ENCODE measurements at regions of chr22 and their contacts with region 1.

Region 1: DNA sequence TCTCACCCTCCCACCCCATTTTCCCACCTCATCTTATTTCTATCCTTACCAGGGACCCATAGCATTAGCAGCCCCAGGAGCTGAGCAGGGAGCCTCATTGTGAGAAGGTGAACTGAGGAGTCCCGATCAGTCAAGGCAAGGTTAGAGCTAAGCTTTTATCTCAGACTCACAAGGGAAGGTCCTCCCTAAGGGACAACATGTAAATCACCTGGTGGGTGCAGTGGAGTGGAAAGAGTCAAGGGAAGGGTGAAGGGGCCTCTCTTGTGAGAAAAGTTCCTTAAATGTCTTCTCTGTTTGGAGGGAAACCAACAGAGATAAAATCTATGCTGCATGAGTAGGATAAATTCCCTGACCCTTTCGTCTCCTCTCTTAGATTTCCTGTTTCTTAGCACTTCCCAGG is 85.9 kb downstream of the GAB4 start:
- DNase-seq: no peak
- H3K4me3 ChIP-seq: no peak overlapping the region
- H3K27ac ChIP-seq: no peak overlapping the region
- H3K4me1 ChIP-seq: peaks cover 3% of the 10 kb centered on the region
- H3K27me3 ChIP-seq: peaks cover 12% of the 10 kb centered on the region

Region 2: DNA sequence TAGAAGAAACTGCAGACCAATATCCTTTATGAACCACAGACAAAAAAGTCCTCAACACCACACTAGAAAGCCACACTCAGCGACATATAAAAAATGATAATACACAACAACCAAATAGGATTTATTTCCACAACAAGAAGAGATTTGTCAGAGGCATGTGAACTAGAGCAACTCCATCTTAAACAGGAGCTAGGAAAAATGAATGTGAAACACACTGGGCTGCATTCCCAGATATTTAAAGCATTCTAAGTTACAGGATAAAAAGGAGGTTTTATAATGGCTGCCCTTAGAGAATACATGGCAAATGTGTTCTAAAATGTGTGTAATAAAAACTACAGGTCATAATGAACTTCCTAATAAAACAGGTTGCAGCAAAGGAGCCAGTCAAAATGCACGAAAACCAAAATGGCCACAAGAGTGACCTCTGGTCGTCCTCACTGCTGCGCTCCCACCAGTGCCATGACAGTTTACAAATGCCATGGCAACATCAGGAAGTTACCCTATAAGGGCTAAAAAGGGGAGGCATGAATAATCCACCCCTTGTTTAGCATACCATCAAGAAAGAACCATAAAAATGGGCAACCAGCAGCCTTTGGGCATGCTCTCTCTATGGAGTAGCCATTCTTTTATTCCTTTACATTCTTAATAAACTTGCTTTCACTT is 118.7 kb before region 1 on chr22:
- in situ Hi-C with region 1: no loop called
- DNase-seq: no peak
- H3K4me3 ChIP-seq: no peak overlapping the region
- H3K27ac ChIP-seq: no peak overlapping the region
- H3K4me1 ChIP-seq: peaks cover 5% of the 10 kb centered on the region
- H3K27me3 ChIP-seq: no peaks in the 10 kb centered on the region

Region 3: DNA sequence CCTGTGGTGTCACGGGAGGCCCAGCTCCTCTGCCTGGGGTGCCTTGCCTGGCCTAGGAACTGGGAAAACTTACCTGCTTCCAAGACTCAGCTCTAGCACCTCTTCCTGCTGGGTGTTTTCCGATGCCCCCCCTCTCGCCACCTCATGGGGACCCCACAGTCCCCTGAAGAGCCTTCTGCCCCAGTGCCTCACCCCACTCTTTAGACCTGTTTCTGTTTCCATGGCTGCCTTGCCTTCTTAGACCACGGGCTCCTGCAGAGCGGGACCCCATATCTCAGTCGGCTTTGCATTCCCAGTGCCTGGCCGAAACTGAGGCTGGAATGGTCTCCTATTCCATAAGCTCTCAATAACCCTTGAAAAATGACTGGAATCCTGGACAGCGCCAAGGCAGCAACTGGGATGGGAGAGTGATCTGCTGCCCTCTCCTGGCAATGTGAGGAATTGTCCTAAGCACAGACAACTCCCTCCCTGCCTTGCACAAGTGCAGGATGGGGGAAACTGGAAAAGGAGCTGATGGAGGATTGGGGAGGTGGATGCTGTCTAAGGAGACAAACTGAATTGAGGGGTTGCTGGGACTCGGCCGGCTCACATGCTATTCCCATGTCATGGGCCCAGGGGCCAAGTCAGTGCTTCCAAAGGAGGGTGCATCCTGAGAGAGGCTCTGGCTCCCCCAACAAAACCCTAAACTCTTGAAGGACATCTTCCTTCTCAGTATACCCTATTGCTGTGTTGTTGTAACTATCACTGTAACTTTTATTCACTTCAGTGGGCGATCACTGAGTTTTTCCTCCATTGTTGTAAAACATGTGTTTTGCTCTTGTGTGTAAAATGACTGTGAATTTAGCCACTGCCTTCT is 136.1 kb after region 1 on chr22:
- in situ Hi-C with region 1: loop called (anchors 10 kb)
- DNase-seq: peak; percentile 79
- H3K4me3 ChIP-seq: no peak overlapping the region
- H3K27ac ChIP-seq: no peak overlapping the region
- H3K4me1 ChIP-seq: no peaks in the 10 kb centered on the region
- H3K27me3 ChIP-seq: no peaks in the 10 kb centered on the region

Measured in GM23248 (cell line).